Gastrocnemius medialis (tissue), 4 donors: ENCODE measurements at regions of chr1 and their contacts with region 1.

Region 1: GRCh38 chr1:222171005-222171404 is 376.9 kb downstream of the HHIPL2 start:
- DNase-seq: no peak
- ATAC-seq: peak; percentile 84 to 88
- H3K4me3 ChIP-seq: no peak overlapping the region
- H3K27ac ChIP-seq: no peak overlapping the region
- H3K4me1 ChIP-seq: peaks cover 0 to 4% of the 10 kb centered on the region in 2 donors
- H3K27me3 ChIP-seq: no peaks in the 10 kb centered on the region
- CTCF ChIP-seq: peak; percentile 39 to 63 (median 46)
- POLR2A ChIP-seq: no peak

Region 2: GRCh38 chr1:221478050-221478949 is 692.7 kb before region 1 on chr1:
- in situ Hi-C with region 1: loop called in 2 of 4 experiments (anchors 10 to 25 kb)
- intact Hi-C with region 1: no loop called
- DNase-seq: peak; percentile 22 to 25
- ATAC-seq: peak; percentile 78 to 82
- H3K4me3 ChIP-seq: no peak overlapping the region
- H3K27ac ChIP-seq: no peak overlapping the region
- H3K4me1 ChIP-seq: no peaks in the 10 kb centered on the region
- H3K27me3 ChIP-seq: no peaks in the 10 kb centered on the region
- CTCF ChIP-seq: peak in 2 of 5 experiments; percentile 31 to 64
- POLR2A ChIP-seq: no peak

Region 3: GRCh38 chr1:221543529-221544120 is 627.4 kb before region 1 on chr1:
- in situ Hi-C with region 1: loop called in 2 of 4 experiments (anchors 25 kb)
- intact Hi-C with region 1: loop called (anchors 1 kb)
- DNase-seq: no peak
- ATAC-seq: no peak
- H3K4me3 ChIP-seq: no peak overlapping the region
- H3K27ac ChIP-seq: no peak overlapping the region
- H3K4me1 ChIP-seq: no peaks in the 10 kb centered on the region
- H3K27me3 ChIP-seq: no peaks in the 10 kb centered on the region
- CTCF ChIP-seq: peak in 4 of 5 experiments; percentile 32 to 57 (median 52)
- POLR2A ChIP-seq: no peak

Region 4: DNA sequence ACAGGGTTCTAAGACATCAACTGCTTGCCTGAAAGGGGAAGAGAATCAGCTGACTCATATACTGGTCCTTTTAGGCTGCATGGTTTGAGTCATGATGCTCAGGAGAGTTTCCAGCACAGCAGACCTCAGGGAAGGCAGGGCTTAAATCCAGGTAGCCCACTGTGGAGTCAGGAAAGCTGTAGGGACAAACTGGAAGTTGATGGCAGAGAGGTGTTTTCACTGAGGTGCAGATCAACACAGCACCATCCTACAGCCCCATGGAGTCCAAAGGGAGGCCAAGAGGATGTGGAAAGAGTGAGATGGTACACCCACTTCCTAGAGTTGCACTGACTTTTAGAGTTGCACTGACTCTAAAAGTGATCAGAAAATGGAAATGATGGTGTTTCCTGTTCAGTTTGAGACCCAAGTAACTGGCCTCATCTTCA is 176.7 kb before region 1 on chr1:
- in situ Hi-C with region 1: no loop called
- intact Hi-C with region 1: no loop called
- DNase-seq: no peak
- ATAC-seq: no peak
- H3K4me3 ChIP-seq: no peak overlapping the region
- H3K27ac ChIP-seq: no peak overlapping the region
- H3K4me1 ChIP-seq: no peaks in the 10 kb centered on the region
- H3K27me3 ChIP-seq: no peaks in the 10 kb centered on the region
- CTCF ChIP-seq: no peak
- POLR2A ChIP-seq: no peak